ENCODE measurements at regions of chr19 and their contacts with region 1.

Region 1: DNA sequence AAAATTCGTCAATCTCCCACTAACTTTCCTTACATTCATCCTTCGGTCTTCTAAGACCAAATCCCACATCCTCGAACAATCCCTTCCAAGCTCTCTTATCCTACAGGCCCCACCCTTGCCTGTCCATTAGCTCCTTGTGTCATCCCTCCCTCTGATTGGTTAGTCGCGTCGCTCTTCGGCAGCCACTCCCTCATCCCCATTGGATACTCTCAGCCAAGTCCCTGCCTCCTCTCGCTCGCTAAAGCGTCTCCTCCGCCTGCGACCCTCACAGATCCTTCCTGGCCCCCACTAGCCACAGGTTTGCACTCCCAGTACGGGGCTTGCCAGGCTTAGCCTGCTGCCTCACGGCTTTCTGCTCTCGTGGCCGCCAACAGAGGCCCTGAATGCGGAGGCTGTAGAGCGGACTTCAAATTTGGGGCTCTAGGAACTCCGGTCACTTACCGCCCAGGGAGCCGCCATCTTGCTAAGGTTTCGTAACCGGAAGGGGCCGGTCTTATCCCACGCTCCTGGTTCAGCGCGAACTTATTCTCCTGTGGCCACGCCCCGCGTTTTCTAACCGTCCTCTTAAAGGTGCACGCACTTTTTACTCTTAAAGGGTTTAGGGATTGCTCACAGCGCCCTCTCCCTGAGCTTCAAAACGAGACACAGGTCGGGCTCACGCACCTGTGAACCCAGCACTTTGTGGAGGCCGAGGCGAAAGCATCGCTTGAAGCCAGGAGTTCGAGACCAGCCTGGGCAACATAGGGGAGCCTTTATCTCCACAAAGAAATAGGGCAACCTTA is at the start of gene DMAC2:
- DNase-seq: peak; percentile 96
- H3K4me3 ChIP-seq: peak within 1 kb of the TSS; percentile 80 to 84 (median 82)
- H3K27ac ChIP-seq: peak within 1 kb of the TSS; percentile 95
- H3K4me1 ChIP-seq: no peaks in the 10 kb centered on the region
- H3K27me3 ChIP-seq: peaks cover 0 to 6% of the 10 kb centered on the region in 2 donors
- CTCF ChIP-seq: peak; percentile 23 to 48 (median 37)
- POLR2A ChIP-seq: peak; percentile 46
- total RNA-seq, gene DMAC2: 24.8 to 41.3 (median 31.6) TPM

Region 2: DNA sequence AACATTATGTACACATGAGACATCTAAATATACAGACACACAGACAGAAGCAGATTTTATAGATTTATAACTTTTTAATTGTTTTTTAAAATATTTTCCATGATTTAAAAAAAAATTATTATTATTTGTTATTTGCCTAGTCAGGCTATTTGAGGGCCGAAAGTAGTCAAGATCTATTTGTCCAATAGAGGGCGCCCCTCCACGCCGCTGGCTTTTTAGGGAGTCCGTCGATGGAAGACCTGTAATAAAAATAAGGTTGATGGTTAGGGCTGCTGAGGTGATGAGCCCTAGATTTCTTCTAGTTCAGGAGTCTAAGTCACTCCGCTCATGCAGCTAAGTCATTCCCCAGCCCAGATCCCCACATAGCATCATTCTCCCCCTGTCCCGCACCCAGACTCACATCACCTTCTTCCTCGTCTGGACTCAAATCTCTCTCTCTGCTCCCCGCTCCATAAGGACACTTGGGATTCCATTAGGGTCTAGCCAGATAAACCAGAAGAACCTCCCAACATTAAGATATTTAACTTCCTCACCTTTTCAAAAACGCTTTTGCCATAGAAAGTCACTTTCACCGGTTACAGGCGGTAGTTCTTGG is 102.5 kb after region 1 on chr19:
- intact Hi-C with region 1: loop called (anchors 10 kb)
- DNase-seq: no peak
- H3K4me3 ChIP-seq: no peak overlapping the region
- H3K27ac ChIP-seq: no peak overlapping the region
- H3K4me1 ChIP-seq: no peaks in the 10 kb centered on the region
- H3K27me3 ChIP-seq: peaks cover 0 to 12% of the 10 kb centered on the region in 2 donors
- CTCF ChIP-seq: peak in 2 of 3 donors; percentile 15 to 32
- POLR2A ChIP-seq: no peak